MCF 10A (cell line): ENCODE measurements at regions of chr2 and their contacts with region 1.

Region 1: GRCh38 chr2:42086500-42086953 is 38.7 kb downstream of the PKDCC start:
- DNase-seq: peak; percentile 72
- H3K4me3 Mint-ChIP-seq: no peak overlapping the region
- H3K27ac Mint-ChIP-seq: no peak overlapping the region
- H3K4me1 Mint-ChIP-seq: no peaks in the 10 kb centered on the region
- H3K27me3 Mint-ChIP-seq: peaks cover 16% of the 10 kb centered on the region
- CTCF ChIP-seq: peak; percentile 88

Region 2: DNA sequence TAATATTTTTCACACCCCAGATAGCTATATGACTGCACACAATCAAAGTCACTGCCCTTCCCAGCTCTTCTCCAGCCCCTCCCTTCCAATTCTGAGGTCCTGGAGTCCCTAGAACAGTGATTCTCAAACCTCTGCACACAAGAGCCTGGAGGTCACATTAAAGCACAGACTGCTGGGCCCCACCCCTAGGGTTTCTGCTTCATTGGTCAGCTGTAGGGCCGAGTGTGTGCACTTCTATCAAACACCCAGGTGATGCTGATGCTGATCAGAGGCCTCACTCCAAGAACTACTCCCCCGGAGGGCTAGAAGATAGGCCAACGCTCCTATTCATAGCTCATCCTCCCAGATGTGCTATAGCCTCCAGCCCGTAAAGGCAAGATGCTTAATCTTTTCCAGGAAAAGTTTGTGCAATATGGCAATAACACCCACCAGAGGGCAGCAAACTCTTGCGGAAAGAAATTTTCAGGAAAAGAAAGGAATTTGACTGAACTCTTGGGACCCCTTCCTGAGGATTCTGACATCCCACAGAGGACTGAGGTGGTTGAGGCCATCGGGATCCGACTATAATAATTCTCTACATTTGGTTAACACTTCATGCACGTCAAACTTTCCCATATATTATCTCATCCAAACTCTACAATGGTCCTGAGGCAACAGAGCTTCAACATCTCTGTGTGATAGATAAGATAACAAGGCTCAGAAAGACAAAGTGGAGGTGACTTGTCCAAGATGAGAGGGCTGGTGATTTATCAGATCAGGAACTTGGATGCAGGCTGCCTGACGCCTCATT is 232.9 kb before region 1 on chr2:
- CTCF ChIA-PET with region 1: interaction called, 382 read pairs
- POLR2A ChIA-PET with region 1: interaction called, 6 read pairs
- intact Hi-C with region 1: loop called (anchors 1 kb)
- DNase-seq: peak; percentile 59
- H3K4me3 Mint-ChIP-seq: no peak overlapping the region
- H3K27ac Mint-ChIP-seq: no peak overlapping the region
- H3K4me1 Mint-ChIP-seq: peaks cover 2% of the 10 kb centered on the region
- H3K27me3 Mint-ChIP-seq: peaks cover 15% of the 10 kb centered on the region
- CTCF ChIP-seq: peak; percentile 67

Region 3: DNA sequence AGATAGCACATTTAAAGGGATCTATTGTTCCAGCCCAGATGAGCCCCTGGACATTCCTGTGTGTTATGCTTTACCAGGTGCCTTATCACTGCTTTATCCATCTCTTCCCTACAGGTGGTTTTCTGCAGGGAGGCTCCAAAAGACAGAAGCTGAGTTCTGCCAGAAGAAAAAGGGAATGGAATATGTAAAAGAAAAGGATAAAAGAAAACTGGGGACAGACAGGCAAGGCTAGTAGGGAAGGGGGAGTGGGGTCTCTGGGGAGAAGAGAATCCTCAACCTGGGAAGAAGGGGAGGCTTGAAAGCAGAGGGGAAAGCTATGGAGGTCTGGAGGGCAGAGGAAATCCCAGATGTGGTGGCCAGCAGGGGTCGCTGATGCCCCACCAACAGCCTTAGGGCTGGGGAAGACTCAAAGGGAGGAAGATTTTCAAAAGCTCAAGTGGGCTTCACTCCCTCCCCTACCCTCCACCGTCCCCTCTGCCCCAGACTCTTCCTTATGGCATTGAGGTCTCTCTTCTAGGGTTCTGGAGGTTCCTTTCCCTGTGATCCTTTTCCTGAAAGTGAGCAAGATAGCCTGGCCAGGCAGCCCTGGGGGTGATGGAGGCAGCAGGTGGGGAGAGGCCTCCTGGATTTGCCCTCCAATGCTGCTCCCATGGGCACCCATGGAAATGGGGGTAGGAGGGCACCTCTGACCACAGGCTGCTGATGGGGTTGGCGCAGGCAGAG is 216.8 kb before region 1 on chr2:
- CTCF ChIA-PET with region 1: interaction called, 612 read pairs
- POLR2A ChIA-PET with region 1: interaction called, 7 read pairs
- intact Hi-C with region 1: loop called (anchors 1 kb)
- DNase-seq: peak; percentile 66
- H3K4me3 Mint-ChIP-seq: no peak overlapping the region
- H3K27ac Mint-ChIP-seq: no peak overlapping the region
- H3K4me1 Mint-ChIP-seq: no peaks in the 10 kb centered on the region
- H3K27me3 Mint-ChIP-seq: no peaks in the 10 kb centered on the region
- CTCF ChIP-seq: peak; percentile 93

Region 4: DNA sequence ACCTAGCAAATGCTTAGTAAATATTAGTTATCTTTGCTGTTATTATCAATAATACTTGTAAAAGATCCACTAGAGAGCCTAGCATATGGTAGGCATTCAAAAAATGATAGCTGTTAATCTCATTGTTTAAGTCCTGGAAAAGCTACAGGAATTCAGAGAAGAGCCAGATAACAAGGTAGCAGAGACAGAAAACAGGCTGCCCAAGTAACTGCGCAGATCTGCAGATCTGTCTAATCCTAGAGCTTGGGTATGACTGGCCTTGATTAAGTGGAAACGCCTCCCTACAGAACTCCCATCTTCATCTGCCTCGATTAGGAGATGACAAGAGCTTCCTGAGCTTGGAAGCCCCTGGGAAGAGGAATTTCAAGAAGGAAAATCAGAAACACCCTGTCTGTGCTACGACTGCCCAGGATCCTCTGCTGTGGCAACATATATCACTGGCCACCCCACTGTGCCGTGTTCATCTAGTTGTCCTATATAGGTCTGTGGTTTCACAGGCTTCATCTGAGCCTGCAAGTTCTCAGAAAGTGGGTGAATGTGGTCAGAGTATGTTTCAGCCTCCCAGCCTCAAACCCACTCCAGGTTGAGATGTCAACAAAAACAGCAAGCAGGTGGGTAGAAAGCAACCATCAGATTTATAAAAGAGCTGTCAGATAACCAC is 190.2 kb before region 1 on chr2:
- CTCF ChIA-PET with region 1: interaction called, 10 read pairs
- POLR2A ChIA-PET with region 1: interaction called, 3 read pairs
- intact Hi-C with region 1: no loop called
- DNase-seq: no peak
- H3K4me3 Mint-ChIP-seq: no peak overlapping the region
- H3K27ac Mint-ChIP-seq: no peak overlapping the region
- H3K4me1 Mint-ChIP-seq: peaks cover 5% of the 10 kb centered on the region
- H3K27me3 Mint-ChIP-seq: no peaks in the 10 kb centered on the region
- CTCF ChIP-seq: no peak

Region 5: DNA sequence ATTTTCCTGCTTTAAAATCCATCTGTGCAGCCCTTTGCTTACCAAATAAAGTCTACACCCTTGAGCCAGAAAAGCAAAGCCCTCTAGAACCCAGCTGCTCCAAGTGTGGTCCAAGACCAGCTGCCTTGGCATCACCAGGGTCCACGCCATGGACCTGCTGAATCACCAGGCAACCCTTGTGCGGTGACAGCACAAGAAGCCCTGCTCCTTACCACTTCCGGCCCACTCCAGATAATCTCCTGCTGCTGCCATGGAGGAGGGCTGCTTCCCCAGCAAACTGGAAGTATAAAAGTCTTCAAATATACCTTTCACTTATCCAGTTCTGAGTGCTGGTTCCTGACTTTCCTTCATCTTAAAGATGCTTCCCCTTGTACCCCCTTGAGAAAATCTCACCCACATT is 144.7 kb before region 1 on chr2:
- CTCF ChIA-PET with region 1: interaction called, 13 read pairs
- POLR2A ChIA-PET with region 1: no interaction called
- intact Hi-C with region 1: no loop called
- DNase-seq: no peak
- H3K4me3 Mint-ChIP-seq: no peak overlapping the region
- H3K27ac Mint-ChIP-seq: no peak overlapping the region
- H3K4me1 Mint-ChIP-seq: no peaks in the 10 kb centered on the region
- H3K27me3 Mint-ChIP-seq: peaks cover 38% of the 10 kb centered on the region
- CTCF ChIP-seq: no peak

Region 6: DNA sequence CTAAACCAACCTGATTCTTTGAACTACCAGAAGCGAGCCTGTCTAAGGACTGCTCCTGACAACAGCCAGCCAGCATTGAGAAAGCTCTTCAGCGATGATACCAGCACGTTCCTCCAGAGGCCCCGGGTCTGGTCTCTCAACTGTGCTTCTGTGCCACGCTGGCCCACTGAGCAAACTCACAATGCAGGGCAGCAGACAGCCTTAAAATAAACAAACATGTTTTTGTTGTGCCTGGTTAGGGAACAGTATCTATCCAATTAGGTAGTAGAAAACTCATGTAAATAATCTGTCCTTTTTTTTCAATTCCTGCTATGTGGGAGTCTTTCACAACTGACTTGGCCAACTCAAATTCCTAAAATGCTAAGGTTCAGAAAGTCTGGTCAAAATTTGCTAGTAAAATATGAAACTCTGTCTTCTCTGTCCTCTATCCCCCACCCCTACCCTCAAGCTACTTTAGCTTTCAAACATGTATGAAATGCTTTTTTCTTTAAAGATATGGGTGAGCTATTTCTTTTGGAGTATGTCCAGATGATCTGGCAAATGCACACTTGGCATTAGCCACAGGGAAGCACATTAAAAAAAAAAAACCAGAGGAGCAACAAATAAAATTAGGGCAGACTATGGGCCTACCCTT is 61.2 kb after region 1 on chr2:
- CTCF ChIA-PET with region 1: no interaction called
- POLR2A ChIA-PET with region 1: no interaction called
- intact Hi-C with region 1: no loop called
- DNase-seq: peak; percentile 35
- H3K4me3 Mint-ChIP-seq: no peak overlapping the region
- H3K27ac Mint-ChIP-seq: peak overlapping the region; percentile 61
- H3K4me1 Mint-ChIP-seq: peaks cover 11% of the 10 kb centered on the region
- H3K27me3 Mint-ChIP-seq: no peaks in the 10 kb centered on the region
- CTCF ChIP-seq: no peak

Region 7: DNA sequence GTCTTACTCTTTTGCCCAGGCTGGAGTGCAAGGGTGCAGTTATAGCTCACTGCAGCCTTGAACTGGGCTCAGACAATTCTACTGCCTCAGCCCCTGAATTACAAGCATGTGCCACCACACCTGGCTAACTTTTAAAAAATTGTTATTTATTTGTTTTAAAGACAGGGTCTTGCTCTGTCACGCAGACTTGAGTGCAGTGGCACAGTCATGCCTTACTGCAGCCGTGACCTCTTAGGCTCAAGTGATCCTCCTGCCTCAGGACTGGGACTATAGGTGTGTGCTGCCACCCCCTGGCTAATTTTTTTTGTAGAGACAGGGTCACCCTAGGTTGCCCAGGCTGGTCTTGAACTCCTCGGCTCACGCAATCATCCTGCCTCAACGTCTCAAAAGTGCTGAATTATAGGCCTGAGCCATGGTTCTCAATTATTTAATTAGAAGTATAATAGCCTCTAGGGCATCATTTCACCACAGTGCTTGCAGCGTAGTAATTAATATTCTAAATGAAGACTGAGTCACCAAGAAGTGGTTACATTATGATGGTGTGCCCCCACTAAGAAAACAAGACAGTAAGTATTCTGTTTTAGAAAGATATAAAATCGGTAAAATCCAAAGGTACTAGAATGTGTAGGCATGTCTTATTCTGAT is 152.2 kb after region 1 on chr2:
- CTCF ChIA-PET with region 1: interaction called, 222 read pairs
- POLR2A ChIA-PET with region 1: no interaction called
- intact Hi-C with region 1: no loop called
- DNase-seq: peak; percentile 65
- H3K4me3 Mint-ChIP-seq: no peak overlapping the region
- H3K27ac Mint-ChIP-seq: no peak overlapping the region
- H3K4me1 Mint-ChIP-seq: no peaks in the 10 kb centered on the region
- H3K27me3 Mint-ChIP-seq: no peaks in the 10 kb centered on the region
- CTCF ChIP-seq: peak; percentile 64

Region 8: DNA sequence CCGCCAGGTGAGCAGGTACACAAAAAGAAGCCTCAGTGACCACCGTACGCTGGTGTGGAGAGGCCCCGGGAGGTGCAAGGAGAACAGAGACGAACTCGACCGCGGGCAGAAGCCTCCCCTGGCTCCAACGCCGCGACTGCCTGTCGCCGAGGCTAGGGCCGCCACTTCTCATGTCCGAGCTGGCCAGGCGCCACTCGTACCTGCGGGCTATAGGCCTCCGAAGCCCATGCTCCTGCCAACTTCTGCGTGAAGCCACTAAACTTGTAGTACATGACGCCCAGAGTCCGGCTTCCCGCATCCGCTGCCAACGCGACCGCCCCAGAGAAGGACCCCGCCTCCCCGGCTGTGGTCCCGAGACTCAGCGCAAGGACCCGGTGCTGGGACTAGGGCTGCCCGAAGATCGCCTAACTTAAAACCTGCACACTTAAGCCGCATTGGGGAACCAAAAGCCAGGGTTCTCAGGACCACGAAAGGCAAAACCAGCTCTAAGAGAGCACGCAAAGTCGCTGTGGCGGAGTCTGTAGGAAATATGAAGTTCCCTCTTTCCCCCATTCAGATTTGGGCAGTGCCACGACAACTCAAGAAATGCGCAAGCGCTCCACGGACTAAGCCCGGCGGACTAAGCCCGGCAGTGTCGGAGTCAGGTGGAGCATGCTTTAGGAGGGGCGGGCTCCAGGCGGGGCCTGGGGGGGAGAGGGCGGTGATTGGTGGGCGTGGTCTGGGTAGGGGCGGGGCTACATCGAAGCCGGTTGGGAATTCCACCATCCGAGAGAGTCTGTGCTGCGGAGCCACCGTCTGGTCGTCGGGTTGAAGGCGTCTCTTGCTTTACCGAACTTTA is 274.6 kb after region 1 on chr2 and contains the start of gene COX7A2L:
- CTCF ChIA-PET with region 1: interaction called, 10 read pairs
- POLR2A ChIA-PET with region 1: interaction called, 3 read pairs
- intact Hi-C with region 1: no loop called
- DNase-seq: peak; percentile 96
- H3K4me3 Mint-ChIP-seq: peak within 1 kb of the TSS; percentile 79
- H3K27ac Mint-ChIP-seq: peak within 1 kb of the TSS; percentile 86
- H3K4me1 Mint-ChIP-seq: peaks cover 32% of the 10 kb centered on the region
- H3K27me3 Mint-ChIP-seq: no peaks in the 10 kb centered on the region
- CTCF ChIP-seq: no peak
- total RNA-seq, gene COX7A2L: 190 and 249 TPM in 2 replicates